Psoas muscle (tissue), 8 donors: ENCODE measurements at regions of chr15 and their contacts with region 1.

Region 1: GRCh38 chr15:65638681-65639089 is 16.9 kb downstream of the SLC24A1 start:
- DNase-seq: no peak
- ATAC-seq: peak; percentile 65 to 90 (median 78)
- H3K4me3 ChIP-seq: no peak overlapping the region
- H3K27ac ChIP-seq: no peak overlapping the region
- H3K4me1 ChIP-seq: peaks cover 4% of the 10 kb centered on the region
- H3K27me3 ChIP-seq: no peaks in the 10 kb centered on the region
- CTCF ChIP-seq: peak; percentile 79

Region 2: GRCh38 chr15:65595960-65596359 is 42.7 kb before region 1 on chr15:
- intact Hi-C with region 1: no loop called
- DNase-seq: no peak
- ATAC-seq: no peak
- H3K4me3 ChIP-seq: no peak overlapping the region
- H3K27ac ChIP-seq: no peak overlapping the region
- H3K4me1 ChIP-seq: no peaks in the 10 kb centered on the region
- H3K27me3 ChIP-seq: no peaks in the 10 kb centered on the region
- CTCF ChIP-seq: no peak

Region 3: DNA sequence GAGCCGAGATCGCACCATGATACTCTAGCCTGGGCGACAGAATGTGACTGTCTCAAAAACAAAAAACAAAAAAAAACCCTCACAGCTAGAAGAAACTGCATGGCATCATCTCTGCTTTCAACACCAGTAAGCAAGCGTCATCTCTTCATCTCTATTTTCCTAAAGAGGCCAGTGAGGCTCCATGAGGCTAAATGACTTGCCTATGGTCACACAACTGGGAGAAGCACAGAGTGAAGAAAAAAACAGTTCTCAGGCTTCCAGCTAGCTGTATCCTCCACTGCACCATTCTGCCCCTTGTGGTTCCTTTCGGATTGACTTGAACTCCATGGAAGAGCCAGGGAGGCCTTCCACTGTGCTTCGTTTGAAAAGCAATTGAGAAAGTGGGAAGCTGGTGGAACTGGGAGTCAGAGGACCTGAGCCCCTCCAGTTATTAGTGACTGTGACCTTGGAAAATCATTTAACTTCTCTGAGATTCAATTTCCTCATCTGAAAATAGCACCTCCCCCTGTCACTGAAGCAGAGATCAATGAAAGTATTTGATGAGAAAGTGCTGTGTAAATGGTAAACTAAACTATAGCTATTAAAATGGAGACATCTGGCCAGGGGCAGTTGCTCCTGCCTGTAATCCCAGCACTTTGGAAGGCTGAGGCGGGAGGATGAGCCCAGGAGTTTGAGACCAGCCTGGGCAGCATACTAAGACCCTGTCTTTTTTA is 185.5 kb after region 1 on chr15:
- intact Hi-C with region 1: loop called in 1 of 2 experiments (anchors 10 kb)
- DNase-seq: peak in 1 of 2 donors; percentile 25
- ATAC-seq: peak; percentile 89 to 94 (median 92)
- H3K4me3 ChIP-seq: no peak overlapping the region
- H3K27ac ChIP-seq: peak overlapping the region; percentile 23
- H3K4me1 ChIP-seq: peaks cover 4% of the 10 kb centered on the region
- H3K27me3 ChIP-seq: no peaks in the 10 kb centered on the region
- CTCF ChIP-seq: peak; percentile 61

Region 4: GRCh38 chr15:65869127-65869953 is 230.7 kb after region 1 on chr15 and contains the start of gene RAB11A:
- intact Hi-C with region 1: loop called in 1 of 2 experiments (anchors 10 kb)
- DNase-seq: peak; percentile 96 to 99
- ATAC-seq: peak; percentile 98 to 100 (median 99)
- H3K4me3 ChIP-seq: peak within 1 kb of the TSS; percentile 98
- H3K27ac ChIP-seq: peak within 1 kb of the TSS; percentile 95
- H3K4me1 ChIP-seq: peaks cover 10% of the 10 kb centered on the region
- H3K27me3 ChIP-seq: no peaks in the 10 kb centered on the region
- CTCF ChIP-seq: peak; percentile 36
- total RNA-seq, gene RAB11A: 89.5 to 152 (median 105) TPM

Region 5: DNA sequence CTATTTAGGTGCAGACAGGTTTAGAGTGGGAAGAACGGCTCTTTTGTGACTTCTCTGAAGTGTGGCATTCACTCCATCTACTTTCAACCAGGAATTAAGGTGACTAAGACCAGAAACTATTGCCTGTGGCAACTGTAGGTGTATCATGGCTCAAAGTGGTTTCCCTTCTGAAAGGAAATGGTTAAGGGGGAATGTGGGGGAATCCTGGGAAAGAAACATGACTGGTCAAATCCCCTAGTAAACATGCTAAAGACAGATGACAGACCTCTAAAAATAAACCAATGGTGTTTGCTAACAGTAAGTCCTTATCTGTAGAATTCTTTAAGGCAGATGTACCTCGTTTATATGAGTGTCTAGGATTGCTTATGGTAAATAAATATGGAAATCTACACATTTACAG is 557.9 kb after region 1 on chr15:
- intact Hi-C with region 1: loop called in 1 of 2 experiments (anchors 10 kb)
- DNase-seq: no peak
- ATAC-seq: no peak
- H3K4me3 ChIP-seq: no peak overlapping the region
- H3K27ac ChIP-seq: no peak overlapping the region
- H3K4me1 ChIP-seq: no peaks in the 10 kb centered on the region
- H3K27me3 ChIP-seq: no peaks in the 10 kb centered on the region
- CTCF ChIP-seq: no peak

Region 6: DNA sequence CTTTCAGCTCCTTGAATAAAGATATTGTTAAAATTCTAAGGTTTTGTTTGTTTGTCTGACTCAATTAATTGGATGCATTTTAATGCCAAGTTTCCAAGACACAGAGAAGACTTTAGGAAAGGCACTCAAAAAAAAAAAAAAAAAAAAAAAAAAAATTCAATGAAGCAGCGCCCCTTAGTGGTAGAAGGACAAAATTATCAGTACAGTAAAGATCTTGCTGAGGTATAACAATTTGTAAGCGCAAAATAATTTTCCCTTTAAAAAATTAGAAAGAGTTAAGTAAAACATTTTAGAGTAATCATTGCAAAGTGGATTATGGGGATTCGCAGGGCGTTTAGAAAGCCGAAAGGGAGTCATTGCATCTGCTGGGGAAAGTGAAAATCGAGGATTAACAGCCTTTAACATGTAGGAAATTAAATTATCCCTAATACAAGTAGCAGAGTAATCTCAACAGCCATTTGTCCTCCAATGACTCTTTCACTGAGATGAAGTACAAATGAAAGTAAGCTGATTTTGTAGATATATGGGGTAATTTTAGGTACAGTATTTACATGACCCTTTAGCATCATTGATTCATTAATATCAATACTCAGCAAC is 648.9 kb after region 1 on chr15:
- intact Hi-C with region 1: loop called (anchors 10 kb)
- DNase-seq: no peak
- ATAC-seq: peak in 1 of 4 donors; percentile 52
- H3K4me3 ChIP-seq: no peak overlapping the region
- H3K27ac ChIP-seq: no peak overlapping the region
- H3K4me1 ChIP-seq: peaks cover 9% of the 10 kb centered on the region
- H3K27me3 ChIP-seq: no peaks in the 10 kb centered on the region
- CTCF ChIP-seq: peak; percentile 61